ENCODE measurements at regions of chr9 and their contacts with region 1.

Region 1: GRCh38 chr9:87502436-87503221 is 5.0 kb downstream of the DAPK1 start:
- DNase-seq: no peak
- ATAC-seq: peak; percentile 3; the same call in 2 of the 3 replicates
- H3K4me3 ChIP-seq: peak overlapping the region; percentile 33
- H3K27ac ChIP-seq: peak overlapping the region; percentile 41
- H3K4me1 ChIP-seq: peaks cover 13% of the 10 kb centered on the region
- H3K27me3 ChIP-seq: no peaks in the 10 kb centered on the region
- CTCF ChIP-seq: no peak
- EP300 ChIP-seq: no peak
- POLR2A ChIP-seq: no peak
- RAD21 ChIP-seq: 0 out of 2 replicates have a peak, but pooled peaks have one; percentile 3

Region 2: DNA sequence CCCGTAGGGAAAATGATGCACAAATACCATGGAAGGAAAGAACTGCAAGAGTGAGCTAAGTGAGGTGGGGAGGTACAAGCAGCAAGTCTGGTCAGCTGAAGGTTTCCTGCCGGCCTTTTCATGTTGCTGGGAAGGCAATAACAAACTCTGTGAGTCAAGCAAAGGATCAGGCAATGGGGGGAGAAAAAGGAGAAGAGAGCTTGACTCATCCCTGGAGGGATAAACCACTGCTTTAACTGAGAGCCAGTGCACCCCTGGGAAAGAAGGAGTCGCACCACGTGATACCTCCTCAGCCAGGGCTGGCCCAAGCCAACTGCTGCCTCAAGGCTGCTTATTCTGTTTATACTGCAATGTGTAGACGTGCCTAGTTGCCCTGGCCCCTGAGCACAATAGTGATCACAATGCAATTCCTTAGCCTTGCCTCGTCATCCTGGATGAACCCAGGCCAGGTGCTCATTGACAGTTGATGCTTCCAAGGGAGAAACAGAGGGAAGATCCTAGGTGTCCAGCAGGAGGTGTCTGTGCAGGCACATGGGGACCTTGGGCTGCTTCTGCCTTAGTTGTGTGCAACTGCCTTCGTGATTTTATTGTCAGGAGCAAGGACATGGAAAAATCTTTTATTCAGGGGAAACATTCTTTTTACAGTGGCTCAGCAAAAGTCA is 945.4 kb before region 1 on chr9:
- CTCF ChIA-PET with region 1: no interaction called
- POLR2A ChIA-PET with region 1: no interaction called
- RAD21 ChIA-PET with region 1: no interaction called
- SMC1A ChIA-PET with region 1: no interaction called
- in situ Hi-C with region 1: no loop called
- intact Hi-C with region 1: no loop called
- DNase-seq: no peak
- ATAC-seq: no peak
- H3K4me3 ChIP-seq: no peak overlapping the region
- H3K27ac ChIP-seq: no peak overlapping the region
- H3K4me1 ChIP-seq: no peaks in the 10 kb centered on the region
- H3K27me3 ChIP-seq: no peaks in the 10 kb centered on the region; a peak in 1 of 4 replicates
- CTCF ChIP-seq: no peak
- EP300 ChIP-seq: no peak
- POLR2A ChIP-seq: no peak
- RAD21 ChIP-seq: no peak

Region 3: GRCh38 chr9:87324613-87325194 is 177.9 kb before region 1 on chr9:
- CTCF ChIA-PET with region 1: no interaction called
- POLR2A ChIA-PET with region 1: no interaction called
- RAD21 ChIA-PET with region 1: no interaction called
- SMC1A ChIA-PET with region 1: no interaction called
- in situ Hi-C with region 1: no loop called
- intact Hi-C with region 1: no loop called
- DNase-seq: peak; percentile 5
- ATAC-seq: peak; percentile 80
- H3K4me3 ChIP-seq: no peak overlapping the region
- H3K27ac ChIP-seq: no peak overlapping the region
- H3K4me1 ChIP-seq: no peaks in the 10 kb centered on the region
- H3K27me3 ChIP-seq: no peaks in the 10 kb centered on the region
- CTCF ChIP-seq: peak; percentile 57 to 81 (median 66)
- EP300 ChIP-seq: no peak
- POLR2A ChIP-seq: no peak
- RAD21 ChIP-seq: peak; percentile 95

Region 4: GRCh38 chr9:87516222-87516925 is 13.7 kb after region 1 on chr9:
- CTCF ChIA-PET with region 1: interaction called, 4 read pairs
- POLR2A ChIA-PET with region 1: interaction called, 6 read pairs
- RAD21 ChIA-PET with region 1: interaction called, 6 read pairs
- SMC1A ChIA-PET with region 1: interaction called, 15 read pairs
- in situ Hi-C with region 1: no loop called
- intact Hi-C with region 1: no loop called
- DNase-seq: no peak
- ATAC-seq: peak; percentile 8; the same call in 2 of the 3 replicates
- H3K4me3 ChIP-seq: no peak overlapping the region
- H3K27ac ChIP-seq: no peak overlapping the region; the same call in 1 of the 2 replicates
- H3K4me1 ChIP-seq: peaks cover 44% of the 10 kb centered on the region
- H3K27me3 ChIP-seq: no peaks in the 10 kb centered on the region
- CTCF ChIP-seq: no peak
- EP300 ChIP-seq: no peak
- POLR2A ChIP-seq: no peak
- RAD21 ChIP-seq: no peak

Region 5: DNA sequence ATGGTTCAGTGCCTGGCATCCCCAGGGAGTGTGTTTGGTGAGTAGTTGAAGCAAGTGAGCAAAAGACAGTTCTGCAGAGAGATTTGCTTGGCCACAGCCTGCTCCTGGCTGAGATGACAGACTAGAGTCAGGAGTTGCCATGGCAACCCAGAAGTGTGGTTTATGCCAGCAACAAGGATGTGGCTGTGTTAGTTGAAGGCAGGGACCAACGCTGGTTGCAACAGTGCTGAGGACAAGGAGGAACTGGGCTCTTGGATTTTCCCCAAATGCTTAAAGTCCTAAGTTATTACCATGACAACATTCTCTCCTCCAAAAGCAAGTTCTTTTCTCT is 1035.1 kb after region 1 on chr9:
- CTCF ChIA-PET with region 1: no interaction called
- POLR2A ChIA-PET with region 1: no interaction called
- RAD21 ChIA-PET with region 1: no interaction called
- SMC1A ChIA-PET with region 1: no interaction called
- in situ Hi-C with region 1: no loop called
- intact Hi-C with region 1: no loop called
- DNase-seq: no peak
- ATAC-seq: peak; percentile 50; the same call in 2 of the 3 replicates
- H3K4me3 ChIP-seq: no peak overlapping the region
- H3K27ac ChIP-seq: no peak overlapping the region
- H3K4me1 ChIP-seq: no peaks in the 10 kb centered on the region
- H3K27me3 ChIP-seq: peaks cover 0 to 2% of the 10 kb centered on the region in 2 experiments; a peak in 3 of 4 replicates
- CTCF ChIP-seq: no peak
- EP300 ChIP-seq: no peak
- POLR2A ChIP-seq: no peak
- RAD21 ChIP-seq: no peak